ENCODE measurements at regions of chr17 and their contacts with region 1.

Region 1: DNA sequence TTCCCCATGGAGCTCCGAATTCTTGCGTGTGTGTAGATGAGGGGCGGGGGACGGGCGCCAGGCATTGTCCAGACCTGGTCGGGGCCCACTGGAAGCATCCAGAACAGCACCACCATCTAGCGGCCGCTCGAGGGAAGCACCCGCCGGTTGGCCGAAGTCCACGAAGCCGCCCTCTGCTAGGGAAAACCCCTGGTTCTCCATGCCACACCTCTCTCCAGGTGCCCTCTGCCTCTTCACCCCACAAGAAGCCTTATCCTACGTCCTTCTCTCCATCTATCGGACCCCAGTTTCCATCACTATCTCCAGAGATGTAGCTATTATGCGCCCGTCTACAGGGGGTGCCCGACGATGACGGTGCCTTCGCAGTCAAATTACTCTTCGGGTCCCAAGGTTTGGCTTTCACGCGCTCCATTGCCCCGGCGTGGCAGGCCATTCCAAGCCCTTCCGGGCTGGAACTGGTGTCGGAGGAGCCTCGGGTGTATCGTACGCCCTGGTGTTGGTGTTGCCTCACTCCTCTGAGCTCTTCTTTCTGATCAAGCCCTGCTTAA is 617 bp upstream of the SENP3 start:
- DNase-seq: peak; percentile 91 to 98
- ATAC-seq: peak; percentile 81 to 86
- H3K4me3 ChIP-seq: peak overlapping the region; percentile 77
- H3K27ac ChIP-seq: peak overlapping the region; percentile 90 to 97
- H3K4me1 ChIP-seq: peaks cover 45% of the 10 kb centered on the region
- CTCF ChIP-seq: peak; percentile 83
- EP300 ChIP-seq: no peak
- POLR2A ChIP-seq: 0 out of 2 replicates have a peak, but pooled peaks have one; percentile 11
- RAD21 ChIP-seq: peak; percentile 89 to 93

Region 2: GRCh38 chr17:7363311-7363710 is 197.8 kb before region 1 on chr17:
- CTCF ChIA-PET with region 1: interaction called, 92 read pairs
- POLR2A ChIA-PET with region 1: no interaction called
- DNase-seq: peak in 1 of 2 experiments; percentile 52
- ATAC-seq: peak; percentile 45 to 69; a peak in 4 of 6 replicates
- H3K4me3 ChIP-seq: no peak overlapping the region
- H3K27ac ChIP-seq: no peak overlapping the region
- H3K4me1 ChIP-seq: peaks cover 7% of the 10 kb centered on the region; the same call in 2 of the 3 replicates
- CTCF ChIP-seq: no peak
- EP300 ChIP-seq: no peak
- POLR2A ChIP-seq: no peak
- RAD21 ChIP-seq: no peak

Region 3: GRCh38 chr17:7435221-7435675 is 125.9 kb before region 1 on chr17 and contains the start of gene TMEM102:
- CTCF ChIA-PET with region 1: interaction called, 57 read pairs
- POLR2A ChIA-PET with region 1: no interaction called
- DNase-seq: peak; percentile 99
- ATAC-seq: peak; percentile 75 to 87
- H3K4me3 ChIP-seq: peak within 1 kb of the TSS; percentile 55
- H3K27ac ChIP-seq: peak within 1 kb of the TSS; percentile 62 to 85
- H3K4me1 ChIP-seq: peaks cover 23% of the 10 kb centered on the region
- CTCF ChIP-seq: no peak
- EP300 ChIP-seq: no peak
- POLR2A ChIP-seq: peak; percentile 16
- RAD21 ChIP-seq: no peak
- polyA plus RNA-seq, gene TMEM102: 4.4 and 4.9 TPM in 2 replicates

Region 4: GRCh38 chr17:7478276-7479153 is 82.6 kb before region 1 on chr17:
- CTCF ChIA-PET with region 1: interaction called, 19 read pairs
- POLR2A ChIA-PET with region 1: interaction called, 33 read pairs
- DNase-seq: peak; percentile 50 to 65
- ATAC-seq: peak; percentile 40 to 48
- H3K4me3 ChIP-seq: peak overlapping the region; percentile 82
- H3K27ac ChIP-seq: peak overlapping the region; percentile 94 to 100
- H3K4me1 ChIP-seq: peaks cover 42% of the 10 kb centered on the region
- CTCF ChIP-seq: no peak
- EP300 ChIP-seq: no peak
- POLR2A ChIP-seq: no peak
- RAD21 ChIP-seq: no peak

Region 5: GRCh38 chr17:7509937-7510336 is 51.2 kb before region 1 on chr17:
- CTCF ChIA-PET with region 1: interaction called, 232 read pairs
- POLR2A ChIA-PET with region 1: interaction called, 5 read pairs
- DNase-seq: no peak
- ATAC-seq: no peak
- H3K4me3 ChIP-seq: no peak overlapping the region
- H3K27ac ChIP-seq: no peak overlapping the region
- H3K4me1 ChIP-seq: no peaks in the 10 kb centered on the region
- CTCF ChIP-seq: no peak
- EP300 ChIP-seq: no peak
- POLR2A ChIP-seq: no peak
- RAD21 ChIP-seq: no peak

Region 6: DNA sequence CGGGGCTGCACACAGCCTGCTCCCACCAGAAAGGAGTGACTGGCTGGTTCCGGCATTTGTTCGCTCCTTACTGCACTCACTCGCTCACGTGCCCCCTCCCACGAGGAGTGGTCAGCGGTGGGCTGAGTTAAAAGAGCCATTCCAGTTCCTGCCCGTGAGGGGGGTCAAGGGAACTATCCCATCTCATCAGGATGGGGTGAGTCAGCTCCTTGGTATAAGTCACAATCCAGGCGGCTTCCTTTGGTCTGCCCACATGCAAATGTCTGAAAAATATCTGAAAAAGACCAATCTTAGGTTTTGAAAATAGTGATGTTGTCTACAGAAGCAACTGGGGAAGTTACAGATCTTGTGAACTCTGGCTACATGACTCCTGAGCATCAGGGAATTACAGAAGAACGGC is 22.2 kb before region 1 on chr17:
- CTCF ChIA-PET with region 1: interaction called, 190 read pairs
- POLR2A ChIA-PET with region 1: no interaction called
- DNase-seq: no peak
- ATAC-seq: no peak
- H3K4me3 ChIP-seq: no peak overlapping the region
- H3K27ac ChIP-seq: no peak overlapping the region
- H3K4me1 ChIP-seq: no peaks in the 10 kb centered on the region
- CTCF ChIP-seq: no peak
- EP300 ChIP-seq: no peak
- POLR2A ChIP-seq: no peak
- RAD21 ChIP-seq: no peak

Region 7: GRCh38 chr17:7589204-7589868 is 28.2 kb after region 1 on chr17:
- CTCF ChIA-PET with region 1: interaction called, 10 read pairs
- POLR2A ChIA-PET with region 1: no interaction called
- DNase-seq: peak in 1 of 2 experiments; percentile 72
- ATAC-seq: peak; percentile 22 to 65; a peak in 3 of 6 replicates
- H3K4me3 ChIP-seq: no peak overlapping the region
- H3K27ac ChIP-seq: peak overlapping the region in 1 of 2 experiments; percentile 78; a peak in 2 of 6 replicates
- H3K4me1 ChIP-seq: peaks cover 36% of the 10 kb centered on the region
- CTCF ChIP-seq: peak; percentile 46
- EP300 ChIP-seq: no peak
- POLR2A ChIP-seq: no peak
- RAD21 ChIP-seq: peak; percentile 44 to 45; a peak in 3 of 5 replicates